Left colon (tissue), 2 donors: ENCODE measurements at regions of chr5 and their contacts with region 1.

Region 1: GRCh38 chr5:95858661-95859326 is 36.3 kb upstream of the GLRX start:
- DNase-seq: peak; percentile 82 to 84
- ATAC-seq: peak; percentile 91

Region 2: GRCh38 chr5:96336351-96336985 is 477.7 kb after region 1 on chr5:
- intact Hi-C with region 1: loop called (anchors 2 to 5 kb)
- DNase-seq: peak; percentile 64 to 74
- ATAC-seq: peak; percentile 70

Region 3: GRCh38 chr5:96601811-96602244 is 743.0 kb after region 1 on chr5:
- intact Hi-C with region 1: loop called in 1 of 2 experiments (anchors 10 kb)
- DNase-seq: peak in 1 of 2 donors; percentile 46
- ATAC-seq: peak; percentile 79